Activated CD4-positive, alpha-beta T cell treated with anti-CD3 and anti-CD28 coated beads for 36 hours (primary cell): ENCODE measurements at regions of chr2 and their contacts with region 1.

Region 1: DNA sequence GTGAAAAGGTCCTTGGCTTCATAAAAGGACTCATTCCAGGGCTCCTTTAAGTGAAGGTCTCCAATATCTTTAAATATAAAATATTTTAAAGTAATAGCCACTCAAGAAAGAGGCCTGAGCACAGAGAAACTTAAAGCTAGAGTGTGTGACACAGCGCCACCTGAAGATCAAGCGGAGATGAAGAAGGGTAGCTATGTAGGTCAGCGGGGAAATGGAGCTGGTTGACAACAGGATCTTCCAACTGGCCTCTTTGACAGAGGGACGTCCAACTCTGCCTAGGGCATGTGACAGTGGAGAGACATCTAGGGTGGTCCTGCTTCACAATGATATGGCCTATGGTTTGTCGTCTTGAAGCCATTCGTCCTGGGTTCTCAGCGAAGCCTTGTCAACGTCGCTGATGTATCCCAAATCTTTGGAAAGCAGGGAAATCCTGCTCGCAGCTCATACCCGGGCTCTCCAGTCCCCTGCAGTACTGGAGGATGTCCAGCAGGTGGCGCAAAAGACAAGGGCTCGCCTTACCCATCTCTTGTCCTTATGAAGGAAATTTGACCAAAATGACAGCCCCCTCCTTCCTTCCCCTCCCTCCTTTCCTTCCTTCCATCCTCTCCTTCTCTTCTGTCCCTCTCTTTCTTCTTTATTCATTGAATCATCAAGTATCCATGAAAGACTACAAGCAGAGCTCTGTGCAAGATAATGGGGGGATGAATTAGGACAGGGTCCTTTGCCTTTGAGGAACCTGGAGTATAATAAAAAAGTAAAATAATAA is 59.6 kb downstream of the LONRF2 start:
- DNase-seq: peak; percentile 79
- ATAC-seq: peak; percentile 55
- H3K4me3 Mint-ChIP-seq: no peak overlapping the region
- H3K27ac Mint-ChIP-seq: no peak overlapping the region
- H3K4me1 Mint-ChIP-seq: no peaks in the 10 kb centered on the region
- H3K27me3 Mint-ChIP-seq: peaks cover 2% of the 10 kb centered on the region

Region 2: DNA sequence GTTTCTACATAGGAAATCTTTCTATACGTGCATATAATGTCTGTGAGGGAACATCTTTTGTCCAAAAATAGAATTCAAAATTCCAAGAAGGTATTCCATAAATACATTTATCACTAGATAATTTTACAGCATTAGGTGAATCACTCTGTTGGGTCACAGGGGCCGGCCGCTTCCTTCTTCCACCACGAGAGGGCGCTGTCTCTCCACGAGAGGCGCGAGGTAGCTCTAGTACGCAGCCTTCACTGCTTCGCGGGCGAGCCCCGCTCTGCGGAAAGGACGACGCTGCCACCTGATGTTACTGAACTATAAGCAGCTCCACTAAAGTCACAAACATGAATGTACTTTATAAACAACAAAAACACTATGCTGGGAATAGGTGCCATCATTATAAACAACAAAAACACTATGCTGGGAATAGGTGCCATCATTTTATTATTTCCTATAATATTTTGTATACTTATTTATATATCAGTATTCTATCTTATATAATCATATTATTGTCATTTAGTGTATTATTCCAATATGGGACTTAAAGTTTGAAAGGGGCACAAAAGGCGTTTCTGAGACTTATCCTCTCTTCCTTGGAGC is 703.6 kb before region 1 on chr2:
- CTCF ChIA-PET with region 1: interaction called, 20 read pairs
- POLR2A ChIA-PET with region 1: no interaction called
- intact Hi-C with region 1: loop called (anchors 1 to 5 kb)
- DNase-seq: peak; percentile 92
- ATAC-seq: peak; percentile 97
- H3K4me3 Mint-ChIP-seq: no peak overlapping the region
- H3K27ac Mint-ChIP-seq: no peak overlapping the region
- H3K4me1 Mint-ChIP-seq: peaks cover 2% of the 10 kb centered on the region
- H3K27me3 Mint-ChIP-seq: no peaks in the 10 kb centered on the region

Region 3: DNA sequence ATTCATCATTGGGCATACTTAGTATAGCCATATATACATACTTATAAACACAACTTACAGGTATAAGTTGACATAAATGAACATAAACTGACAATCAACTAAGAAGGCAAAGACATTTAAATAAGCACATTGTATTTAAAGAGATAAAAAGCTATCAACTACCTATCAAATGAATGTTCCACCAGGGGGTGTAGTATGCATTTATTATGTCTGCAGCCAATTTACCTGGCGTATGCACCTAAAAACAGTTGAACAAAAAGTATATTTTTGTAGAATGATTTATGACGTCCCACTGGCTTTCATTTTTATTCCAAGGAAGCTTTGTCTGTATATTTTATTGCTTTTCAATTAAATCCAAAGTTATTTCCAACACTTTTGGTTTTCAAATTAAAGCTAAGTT is 443.9 kb before region 1 on chr2:
- CTCF ChIA-PET with region 1: interaction called, 12 read pairs
- POLR2A ChIA-PET with region 1: no interaction called
- intact Hi-C with region 1: no loop called
- DNase-seq: no peak
- ATAC-seq: no peak
- H3K4me3 Mint-ChIP-seq: no peak overlapping the region
- H3K27ac Mint-ChIP-seq: no peak overlapping the region
- H3K4me1 Mint-ChIP-seq: no peaks in the 10 kb centered on the region
- H3K27me3 Mint-ChIP-seq: no peaks in the 10 kb centered on the region

Region 4: GRCh38 chr2:100242891-100243619 is 19.7 kb before region 1 on chr2:
- CTCF ChIA-PET with region 1: interaction called, 10 read pairs
- POLR2A ChIA-PET with region 1: no interaction called
- intact Hi-C with region 1: no loop called
- DNase-seq: peak; percentile 79
- ATAC-seq: peak; percentile 51
- H3K4me3 Mint-ChIP-seq: no peak overlapping the region
- H3K27ac Mint-ChIP-seq: no peak overlapping the region
- H3K4me1 Mint-ChIP-seq: no peaks in the 10 kb centered on the region
- H3K27me3 Mint-ChIP-seq: peaks cover 3% of the 10 kb centered on the region

Region 5: GRCh38 chr2:100272841-100273329 is 10.1 kb after region 1 on chr2:
- CTCF ChIA-PET with region 1: interaction called, 21 read pairs
- POLR2A ChIA-PET with region 1: no interaction called
- intact Hi-C with region 1: no loop called
- DNase-seq: no peak
- ATAC-seq: no peak
- H3K4me3 Mint-ChIP-seq: no peak overlapping the region
- H3K27ac Mint-ChIP-seq: no peak overlapping the region
- H3K4me1 Mint-ChIP-seq: peaks cover 4% of the 10 kb centered on the region
- H3K27me3 Mint-ChIP-seq: no peaks in the 10 kb centered on the region

Region 6: GRCh38 chr2:100381240-100381639 is 118.5 kb after region 1 on chr2:
- CTCF ChIA-PET with region 1: interaction called, 110 read pairs
- POLR2A ChIA-PET with region 1: no interaction called
- intact Hi-C with region 1: loop called (anchors 1 kb)
- DNase-seq: peak; percentile 87
- ATAC-seq: peak; percentile 53
- H3K4me3 Mint-ChIP-seq: no peak overlapping the region
- H3K27ac Mint-ChIP-seq: no peak overlapping the region
- H3K4me1 Mint-ChIP-seq: peaks cover 2% of the 10 kb centered on the region
- H3K27me3 Mint-ChIP-seq: no peaks in the 10 kb centered on the region

Region 7: DNA sequence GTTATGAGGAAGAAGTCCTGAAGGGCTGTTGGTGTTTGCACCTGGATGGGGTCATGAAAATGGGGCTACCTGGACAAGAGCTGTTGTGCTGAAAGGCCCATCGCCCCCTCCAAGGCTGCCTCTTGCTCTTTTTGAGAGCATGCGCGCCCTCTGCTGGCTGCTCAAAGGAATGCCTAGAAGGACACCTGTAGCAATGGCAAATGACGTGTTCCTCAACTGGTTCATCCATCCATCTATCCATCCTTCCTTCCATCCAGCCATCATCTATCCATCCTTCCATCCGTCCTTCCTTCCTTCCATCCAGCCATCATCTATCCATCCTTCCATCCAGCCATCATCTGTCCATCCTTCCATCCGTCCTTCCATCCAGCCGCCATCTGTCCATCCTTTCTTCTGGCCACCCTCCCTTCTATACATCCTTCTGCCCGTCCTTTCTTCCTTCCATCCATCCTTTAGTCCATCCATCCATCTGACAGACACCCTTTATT is 722.2 kb after region 1 on chr2:
- CTCF ChIA-PET with region 1: no interaction called
- POLR2A ChIA-PET with region 1: no interaction called
- intact Hi-C with region 1: loop called in 1 of 2 experiments (anchors 2 kb)
- DNase-seq: peak; percentile 89
- ATAC-seq: peak; percentile 85
- H3K4me3 Mint-ChIP-seq: no peak overlapping the region
- H3K27ac Mint-ChIP-seq: no peak overlapping the region
- H3K4me1 Mint-ChIP-seq: peaks cover 2% of the 10 kb centered on the region
- H3K27me3 Mint-ChIP-seq: peaks cover 2% of the 10 kb centered on the region